Right lobe of liver (tissue), 6 donors: ENCODE measurements at regions of chr14 and their contacts with region 1.

Region 1: GRCh38 chr14:88492272-88493089 is 62.3 kb downstream of the PTPN21 start:
- DNase-seq: peak in 1 of 3 donors; percentile 65
- ATAC-seq: peak; percentile 97 to 99 (median 98)
- H3K4me3 ChIP-seq: no peak overlapping the region
- H3K27ac ChIP-seq: no peak overlapping the region
- H3K4me1 ChIP-seq: no peaks in the 10 kb centered on the region
- H3K27me3 ChIP-seq: no peaks in the 10 kb centered on the region
- CTCF ChIP-seq: peak; percentile 87 to 97 (median 93)
- POLR2A ChIP-seq: no peak

Region 2: GRCh38 chr14:88551094-88551870 is 58.8 kb after region 1 on chr14:
- intact Hi-C with region 1: loop called in 1 of 2 experiments (anchors 10 kb)
- DNase-seq: peak; percentile 82 to 86 (median 85)
- ATAC-seq: peak; percentile 83 to 85 (median 85)
- H3K4me3 ChIP-seq: peak overlapping the region; percentile 52 to 70 (median 66)
- H3K27ac ChIP-seq: peak overlapping the region in 2 of 3 donors; percentile 32 to 50
- H3K4me1 ChIP-seq: peaks cover 0 to 25% (median 10%) of the 10 kb centered on the region in 4 donors
- H3K27me3 ChIP-seq: no peaks in the 10 kb centered on the region
- CTCF ChIP-seq: peak; percentile 26 to 37 (median 32)
- POLR2A ChIP-seq: peak; percentile 29